ENCODE measurements at regions of chrX and their contacts with region 1.

Region 1: GRCh38 chrX:80876877-80877276 is 67.2 kb upstream of the BRWD3 start:
- DNase-seq: no peak
- H3K4me3 Mint-ChIP-seq: no peak overlapping the region
- H3K27ac Mint-ChIP-seq: no peak overlapping the region
- H3K4me1 Mint-ChIP-seq: no peaks in the 10 kb centered on the region
- H3K27me3 Mint-ChIP-seq: no peaks in the 10 kb centered on the region

Region 2: GRCh38 chrX:80799584-80799983 is 77.3 kb before region 1 on chrX:
- CTCF ChIA-PET with region 1: no interaction called
- POLR2A ChIA-PET with region 1: no interaction called
- intact Hi-C with region 1: no loop called
- DNase-seq: no peak
- H3K4me3 Mint-ChIP-seq: no peak overlapping the region
- H3K27ac Mint-ChIP-seq: no peak overlapping the region
- H3K4me1 Mint-ChIP-seq: peaks cover 4% of the 10 kb centered on the region
- H3K27me3 Mint-ChIP-seq: no peaks in the 10 kb centered on the region

Region 3: DNA sequence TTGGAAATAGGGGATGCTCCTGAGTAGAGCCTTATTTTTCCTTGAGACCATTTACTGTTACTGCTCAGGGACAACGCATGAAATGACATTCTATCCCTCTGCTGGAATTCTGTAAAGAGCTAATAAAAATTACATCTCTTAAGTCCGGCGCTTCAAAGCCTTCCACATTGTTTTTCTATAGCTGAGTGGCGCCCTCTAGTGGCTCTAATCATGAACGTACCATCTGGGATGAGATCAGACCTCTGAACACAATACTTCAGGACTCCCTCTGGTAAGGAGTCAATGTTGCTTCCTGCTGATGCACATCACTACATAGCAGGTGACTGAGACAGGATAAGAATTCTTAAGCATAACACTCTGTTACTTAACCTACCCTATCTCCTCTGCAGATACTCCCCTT is 318.8 kb after region 1 on chrX:
- CTCF ChIA-PET with region 1: interaction called, 7 read pairs
- POLR2A ChIA-PET with region 1: no interaction called
- intact Hi-C with region 1: loop called (anchors 10 kb)
- DNase-seq: peak; percentile 60
- H3K4me3 Mint-ChIP-seq: no peak overlapping the region
- H3K27ac Mint-ChIP-seq: no peak overlapping the region
- H3K4me1 Mint-ChIP-seq: no peaks in the 10 kb centered on the region
- H3K27me3 Mint-ChIP-seq: no peaks in the 10 kb centered on the region

Region 4: DNA sequence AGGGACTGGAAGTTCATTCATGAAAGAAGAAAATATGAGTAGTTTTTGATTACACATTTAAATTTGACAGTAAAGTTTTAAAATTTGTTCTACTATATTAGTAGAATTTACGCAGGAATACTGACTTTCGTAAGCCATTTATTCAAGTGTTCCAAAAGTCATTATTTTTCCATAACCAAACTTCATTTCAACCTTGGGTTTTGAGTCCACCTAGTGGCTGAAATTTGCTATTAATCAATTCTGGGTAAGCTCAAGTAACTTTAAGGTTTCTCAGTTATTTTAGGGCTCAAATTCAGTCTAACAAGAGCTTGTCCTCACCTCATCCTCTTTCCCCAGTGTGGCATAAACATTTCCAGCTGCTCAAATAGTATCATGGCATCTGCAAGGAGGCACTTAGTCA is 500.5 kb after region 1 on chrX:
- CTCF ChIA-PET with region 1: interaction called, 13 read pairs
- POLR2A ChIA-PET with region 1: no interaction called
- intact Hi-C with region 1: loop called (anchors 10 kb)
- DNase-seq: no peak
- H3K4me3 Mint-ChIP-seq: no peak overlapping the region
- H3K27ac Mint-ChIP-seq: no peak overlapping the region
- H3K4me1 Mint-ChIP-seq: no peaks in the 10 kb centered on the region
- H3K27me3 Mint-ChIP-seq: peaks cover 2% of the 10 kb centered on the region